Dorsolateral prefrontal cortex (tissue), 120 donors: ENCODE measurements at regions of chr10 and their contacts with region 1.

Region 1: GRCh38 chr10:102743588-102744373 is at the start of gene WBP1L:
- DNase-seq: peak; percentile 90 to 98 (median 96)
- H3K4me3 ChIP-seq: peak within 1 kb of the TSS; percentile 68 to 100 (median 96)
- H3K27ac ChIP-seq: peak within 1 kb of the TSS in 56 of 59 donors; percentile 50 to 93 (median 82)
- H3K27me3 ChIP-seq: no peaks in the 10 kb centered on the region
- CTCF ChIP-seq: peak in 15 of 56 donors; percentile 10 to 57 (median 23)
- total RNA-seq, gene WBP1L: 27.9 to 71.0 (median 38.0) TPM

Region 2: GRCh38 chr10:102713814-102714620 is 29.8 kb before region 1 on chr10 and contains the start of gene ARL3:
- intact Hi-C with region 1: loop called in 1 of 2 experiments (anchors 1 kb)
- DNase-seq: peak; percentile 96 to 99 (median 98)
- H3K4me3 ChIP-seq: peak within 1 kb of the TSS; percentile 73 to 100 (median 95)
- H3K27ac ChIP-seq: peak within 1 kb of the TSS in 58 of 59 donors; percentile 56 to 95 (median 88)
- H3K27me3 ChIP-seq: no peaks in the 10 kb centered on the region
- CTCF ChIP-seq: peak in 29 of 56 donors; percentile 3 to 55 (median 23)
- total RNA-seq, gene ARL3: 16.6 to 45.7 (median 35.4) TPM

Region 3: GRCh38 chr10:102726274-102726673 is 17.5 kb before region 1 on chr10:
- intact Hi-C with region 1: no loop called
- DNase-seq: no peak
- H3K4me3 ChIP-seq: peak overlapping the region in 1 of 59 donors; percentile 14
- H3K27ac ChIP-seq: peak overlapping the region in 1 of 59 donors; percentile 4
- H3K27me3 ChIP-seq: no peaks in the 10 kb centered on the region
- CTCF ChIP-seq: no peak

Region 4: DNA sequence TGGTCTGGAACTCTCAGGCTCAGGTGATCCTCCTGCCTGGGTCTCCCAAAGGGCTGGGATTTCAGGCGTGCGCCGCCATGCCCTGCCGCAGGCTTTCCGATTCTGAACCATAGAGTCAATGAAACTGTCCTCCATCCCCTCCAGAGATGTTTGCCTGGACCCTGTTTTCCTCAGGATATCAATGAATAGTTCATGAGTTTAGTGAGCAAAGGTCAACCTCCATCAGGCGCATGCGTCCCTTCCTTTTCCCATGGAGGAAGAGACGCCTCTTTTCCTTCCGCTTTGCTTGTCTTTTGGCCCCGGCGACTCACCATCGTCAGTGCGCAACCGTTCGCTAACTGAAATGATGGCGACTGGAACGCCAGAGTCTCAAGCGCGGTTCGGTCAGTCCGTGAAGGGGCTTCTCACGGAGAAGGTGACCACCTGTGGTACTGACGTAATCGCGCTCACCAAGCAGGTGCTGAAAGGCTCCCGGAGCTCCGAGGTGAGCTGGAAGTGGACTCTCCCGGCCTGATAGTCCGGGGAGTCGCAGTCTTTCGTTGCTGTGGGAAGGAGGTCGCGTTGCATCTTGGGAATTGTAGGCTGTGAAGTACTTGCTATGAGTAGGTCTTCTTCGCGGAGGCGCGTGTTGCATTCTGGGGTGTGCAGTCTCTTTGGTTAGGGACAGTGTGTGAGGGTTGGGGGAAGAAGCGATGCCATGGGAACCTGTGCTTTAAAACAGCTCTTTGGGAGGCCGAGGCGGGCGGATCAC is 110.3 kb after region 1 on chr10 and contains the start of gene BORCS7:
- intact Hi-C with region 1: loop called in 1 of 2 experiments (anchors 10 kb)
- DNase-seq: peak; percentile 91 to 100 (median 98)
- H3K4me3 ChIP-seq: peak within 1 kb of the TSS; percentile 57 to 96 (median 83)
- H3K27ac ChIP-seq: peak within 1 kb of the TSS; percentile 74 to 100 (median 98)
- H3K27me3 ChIP-seq: no peaks in the 10 kb centered on the region
- CTCF ChIP-seq: peak in 30 of 56 donors; percentile 4 to 52 (median 26)
- total RNA-seq, gene BORCS7: 13.2 to 36.5 (median 22.8) TPM

Region 5: DNA sequence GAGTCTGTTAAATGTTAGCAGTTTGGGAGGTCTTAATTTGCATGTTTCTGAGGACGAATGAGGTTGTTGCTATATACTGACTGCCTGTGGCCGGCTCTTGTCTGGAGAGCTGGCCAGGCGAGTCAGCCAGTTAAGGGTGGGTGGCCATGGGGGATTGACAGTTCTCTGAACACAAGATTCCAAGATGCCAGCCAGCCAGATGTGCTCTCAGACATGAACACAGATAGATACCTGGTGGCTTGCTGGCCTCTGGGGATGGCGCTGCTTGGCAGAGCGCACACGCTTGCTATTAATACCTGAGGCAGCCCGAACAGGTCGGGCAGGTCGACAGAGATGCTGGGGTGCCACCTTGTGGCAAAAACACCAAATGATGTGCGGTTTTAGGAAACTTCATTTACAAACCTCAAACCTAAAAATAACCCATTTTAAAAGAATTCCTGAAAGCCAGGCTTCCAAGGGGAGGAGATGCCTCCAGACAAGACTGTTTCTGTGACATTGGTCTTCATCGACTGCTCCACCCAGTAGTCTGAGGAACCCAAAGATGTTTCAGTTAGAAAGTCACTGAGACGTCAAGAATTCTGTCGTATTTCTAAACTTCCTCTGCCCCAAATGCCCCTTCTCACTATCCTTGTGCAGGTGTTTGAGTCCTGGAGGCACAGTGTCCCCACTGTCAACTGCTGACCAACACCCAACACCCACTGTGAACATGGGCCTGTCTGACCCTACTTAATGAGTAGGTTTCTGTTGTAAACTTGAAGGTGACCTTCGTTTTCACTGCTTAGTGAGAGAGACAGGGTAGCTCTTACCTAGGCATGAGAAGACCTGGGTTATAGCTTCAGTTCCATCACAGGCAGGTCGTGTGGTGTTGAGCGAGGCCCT is 325.9 kb after region 1 on chr10:
- intact Hi-C with region 1: loop called (anchors 10 kb)
- DNase-seq: peak in 8 of 10 donors; percentile 60 to 77 (median 65)
- H3K4me3 ChIP-seq: peak overlapping the region in 1 of 59 donors; percentile 30
- H3K27ac ChIP-seq: peak overlapping the region in 11 of 59 donors; percentile 5 to 48 (median 25)
- H3K27me3 ChIP-seq: no peaks in the 10 kb centered on the region
- CTCF ChIP-seq: peak; percentile 33 to 80 (median 68)

Region 6: GRCh38 chr10:103244663-103245271 is 501.0 kb after region 1 on chr10:
- intact Hi-C with region 1: loop called in 1 of 2 experiments (anchors 10 kb)
- DNase-seq: peak; percentile 41 to 82 (median 70)
- H3K4me3 ChIP-seq: peak overlapping the region in 2 of 59 donors; percentile 6 to 31
- H3K27ac ChIP-seq: no peak overlapping the region
- H3K27me3 ChIP-seq: no peaks in the 10 kb centered on the region
- CTCF ChIP-seq: peak; percentile 52 to 96 (median 88)